CD8-positive, alpha-beta T cell (primary cell): ENCODE measurements at regions of chr1 and their contacts with region 1.

Region 1: DNA sequence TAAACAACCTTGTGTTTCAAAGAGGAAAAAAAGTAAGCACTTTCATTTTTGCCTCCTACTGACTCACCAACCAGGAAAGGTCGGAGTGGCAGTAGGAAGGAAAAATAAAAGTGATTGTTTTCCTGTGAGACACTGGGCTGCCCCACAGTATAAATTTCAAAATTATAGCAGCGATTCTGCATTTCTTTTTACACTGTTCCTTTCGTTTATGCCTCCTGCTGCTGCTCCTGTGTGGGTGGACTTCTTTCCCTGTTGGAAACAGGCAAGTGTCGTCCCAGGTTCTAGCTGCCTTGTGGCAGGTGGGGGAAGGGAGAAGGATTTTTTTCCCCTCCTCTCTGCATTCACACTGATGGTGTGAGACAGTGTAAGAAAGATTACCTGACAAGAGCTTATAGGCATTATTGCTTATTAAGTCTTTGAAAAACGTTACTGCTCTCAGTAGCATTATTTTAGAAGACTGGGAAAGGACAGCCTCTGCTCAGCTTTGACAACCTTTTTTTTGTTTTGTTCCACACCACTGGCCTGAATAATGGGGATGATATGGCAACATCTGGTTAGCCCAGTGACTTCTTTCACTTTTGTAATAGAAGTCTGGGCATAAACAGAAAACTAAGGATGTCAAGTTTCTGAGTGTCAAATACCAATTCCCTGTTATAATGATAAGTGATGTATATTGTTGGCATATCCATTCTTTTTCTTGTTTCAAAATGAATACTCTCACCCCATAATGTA is 77.9 kb downstream of the NEK7 start:
- DNase-seq: peak in 2 of 9 experiments; percentile 17 to 36
- ATAC-seq: peak; percentile 38
- H3K4me3 ChIP-seq: no peak overlapping the region
- H3K4me3 Mint-ChIP-seq: no peak overlapping the region
- H3K27ac ChIP-seq: peak overlapping the region in 1 of 2 experiments; percentile 20
- H3K27ac Mint-ChIP-seq: no peak overlapping the region
- H3K4me1 ChIP-seq: peaks cover 12% of the 10 kb centered on the region
- H3K4me1 Mint-ChIP-seq: peaks cover 50% of the 10 kb centered on the region
- H3K27me3 ChIP-seq: no peaks in the 10 kb centered on the region
- H3K27me3 Mint-ChIP-seq: no peaks in the 10 kb centered on the region
- CTCF ChIP-seq: no peak

Region 2: DNA sequence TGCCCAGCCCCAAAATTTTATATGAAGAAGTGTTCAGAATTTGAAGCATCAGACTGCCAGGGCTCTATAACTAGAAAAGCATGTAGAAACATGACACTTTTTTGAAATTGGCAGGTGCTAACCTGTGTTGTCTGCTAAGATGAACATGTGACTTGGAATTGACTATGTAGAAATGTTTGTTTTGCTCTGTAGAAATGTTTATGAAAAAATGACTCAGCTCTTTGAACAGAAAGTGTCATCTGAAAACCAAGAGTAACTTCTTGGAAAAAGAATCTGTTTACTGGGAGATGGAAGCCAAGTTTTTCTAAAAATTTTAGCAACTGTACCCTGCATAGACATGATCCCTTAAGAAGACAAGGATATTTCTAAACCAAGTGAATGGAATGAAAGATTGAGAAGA is 258.3 kb before region 1 on chr1:
- CTCF ChIA-PET with region 1: no interaction called
- POLR2A ChIA-PET with region 1: no interaction called
- intact Hi-C with region 1: no loop called
- DNase-seq: no peak
- ATAC-seq: no peak
- H3K4me3 ChIP-seq: no peak overlapping the region
- H3K4me3 Mint-ChIP-seq: no peak overlapping the region
- H3K27ac ChIP-seq: no peak overlapping the region
- H3K27ac Mint-ChIP-seq: no peak overlapping the region
- H3K4me1 ChIP-seq: no peaks in the 10 kb centered on the region
- H3K4me1 Mint-ChIP-seq: no peaks in the 10 kb centered on the region
- H3K27me3 ChIP-seq: no peaks in the 10 kb centered on the region
- H3K27me3 Mint-ChIP-seq: peaks cover 2% of the 10 kb centered on the region
- CTCF ChIP-seq: no peak

Region 3: GRCh38 chr1:198220428-198220827 is 14.3 kb before region 1 on chr1:
- CTCF ChIA-PET with region 1: no interaction called
- POLR2A ChIA-PET with region 1: no interaction called
- intact Hi-C with region 1: loop called in 1 of 2 experiments (anchors 2 kb)
- DNase-seq: no peak
- ATAC-seq: no peak
- H3K4me3 ChIP-seq: no peak overlapping the region
- H3K4me3 Mint-ChIP-seq: no peak overlapping the region
- H3K27ac ChIP-seq: no peak overlapping the region
- H3K27ac Mint-ChIP-seq: peak overlapping the region; percentile 62
- H3K4me1 ChIP-seq: no peaks in the 10 kb centered on the region
- H3K4me1 Mint-ChIP-seq: peaks cover 55% of the 10 kb centered on the region
- H3K27me3 ChIP-seq: no peaks in the 10 kb centered on the region
- H3K27me3 Mint-ChIP-seq: no peaks in the 10 kb centered on the region
- CTCF ChIP-seq: no peak

Region 4: GRCh38 chr1:198499588-198499987 is 264.9 kb after region 1 on chr1:
- CTCF ChIA-PET with region 1: no interaction called
- POLR2A ChIA-PET with region 1: no interaction called
- intact Hi-C with region 1: no loop called
- DNase-seq: no peak
- ATAC-seq: no peak
- H3K4me3 ChIP-seq: no peak overlapping the region
- H3K4me3 Mint-ChIP-seq: no peak overlapping the region
- H3K27ac ChIP-seq: no peak overlapping the region
- H3K27ac Mint-ChIP-seq: no peak overlapping the region
- H3K4me1 ChIP-seq: no peaks in the 10 kb centered on the region
- H3K4me1 Mint-ChIP-seq: peaks cover 6% of the 10 kb centered on the region
- H3K27me3 ChIP-seq: no peaks in the 10 kb centered on the region
- H3K27me3 Mint-ChIP-seq: no peaks in the 10 kb centered on the region
- CTCF ChIP-seq: no peak